CD8-positive, alpha-beta T cell (primary cell): ENCODE measurements at regions of chr2 and their contacts with region 1.

Region 1: DNA sequence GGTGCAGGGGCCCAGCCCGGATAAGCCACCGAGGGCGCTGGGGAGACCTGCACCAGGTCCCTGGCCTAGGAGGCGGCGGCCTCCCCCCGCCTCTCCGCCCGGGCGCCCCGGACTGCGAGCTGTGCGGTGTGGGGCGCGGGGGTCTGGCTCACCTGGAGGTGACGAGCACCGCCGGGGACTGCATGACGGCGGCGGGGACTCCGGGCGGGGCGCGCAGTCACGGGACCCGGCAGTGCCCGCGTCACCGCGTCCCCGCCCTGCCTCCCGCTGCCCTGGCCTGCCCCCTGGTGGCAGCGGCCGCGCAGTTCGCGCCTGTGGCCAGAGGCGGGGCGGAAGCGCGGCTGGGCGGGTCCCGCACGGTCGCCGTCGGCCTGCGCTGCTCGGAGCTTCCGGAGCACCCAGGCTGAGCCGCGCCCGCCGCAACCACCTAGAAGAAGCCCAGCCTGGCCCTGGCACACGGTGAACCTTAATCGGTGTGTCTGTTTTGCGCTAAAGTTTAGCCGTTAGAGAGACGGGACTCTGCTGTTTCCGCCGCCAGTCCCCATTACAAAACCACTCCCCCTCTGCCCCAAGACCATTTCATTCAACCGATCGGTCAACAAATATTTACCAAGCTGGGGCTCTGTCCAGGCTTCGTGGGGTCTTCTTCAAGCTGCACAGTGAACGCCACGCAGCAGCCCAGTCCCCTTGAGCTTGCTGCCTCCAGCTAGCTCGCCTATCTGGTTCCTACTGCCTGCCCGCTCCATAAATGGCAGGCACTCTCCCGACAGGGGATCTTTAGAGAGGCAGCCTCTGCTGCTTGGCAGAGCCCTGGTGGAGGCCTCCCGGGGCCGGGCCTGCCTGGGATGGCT is at the start of gene HS1BP3:
- DNase-seq: peak; percentile 82 to 95 (median 88)
- ATAC-seq: peak; percentile 91
- H3K4me3 ChIP-seq: peak within 1 kb of the TSS; percentile 76 to 95
- H3K4me3 Mint-ChIP-seq: peak within 1 kb of the TSS; percentile 85
- H3K27ac ChIP-seq: peak within 1 kb of the TSS; percentile 93 to 94
- H3K27ac Mint-ChIP-seq: peak within 1 kb of the TSS; percentile 91
- H3K4me1 ChIP-seq: peaks cover 19% of the 10 kb centered on the region
- H3K4me1 Mint-ChIP-seq: peaks cover 34% of the 10 kb centered on the region
- H3K27me3 ChIP-seq: no peaks in the 10 kb centered on the region
- H3K27me3 Mint-ChIP-seq: peaks cover 2% of the 10 kb centered on the region
- CTCF ChIP-seq: peak; percentile 86
- total RNA-seq, gene HS1BP3: 3.3 to 6.9 TPM

Region 2: DNA sequence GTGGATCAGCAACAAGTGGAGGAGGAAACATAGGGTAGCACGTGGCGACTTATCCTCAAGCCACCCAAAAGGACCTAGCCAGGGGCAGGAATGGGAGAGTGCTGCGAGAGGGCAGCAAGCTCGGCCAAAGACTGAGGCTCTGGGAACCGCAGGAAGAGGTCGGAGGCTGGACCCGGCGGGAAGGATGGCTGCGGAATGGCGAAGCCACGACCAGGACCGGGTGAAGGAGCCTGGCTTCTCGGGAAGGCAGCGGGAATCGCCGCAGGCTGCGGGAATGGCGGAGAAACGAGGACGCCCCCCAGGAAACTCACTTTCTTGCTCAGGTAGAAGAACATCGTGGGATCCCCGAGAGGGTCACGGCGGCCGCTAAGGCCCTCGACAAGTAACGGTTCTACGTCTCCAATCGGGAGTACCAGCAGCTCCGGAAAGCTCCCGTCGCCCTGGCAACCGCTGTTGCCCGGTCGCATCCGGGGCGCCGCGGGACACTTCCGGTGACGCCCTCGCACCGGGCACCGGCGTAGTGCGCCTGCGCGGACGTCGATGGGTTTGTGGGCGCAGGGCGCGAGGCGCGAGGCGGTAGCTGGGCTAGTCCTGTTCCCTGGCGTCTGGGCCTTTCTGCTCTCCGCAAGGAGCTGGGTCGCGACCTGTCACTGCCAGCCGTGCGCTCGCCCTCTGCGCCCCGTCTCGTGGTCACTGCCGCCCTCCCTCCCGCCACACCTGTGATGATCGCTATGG is 661.3 kb before region 1 on chr2 and contains the start of gene WDR35:
- CTCF ChIA-PET with region 1: no interaction called
- POLR2A ChIA-PET with region 1: interaction called, 3 read pairs
- intact Hi-C with region 1: loop called in 1 of 2 experiments (anchors 1 kb)
- DNase-seq: peak; percentile 80 to 96 (median 92)
- ATAC-seq: peak; percentile 94
- H3K4me3 ChIP-seq: peak within 1 kb of the TSS; percentile 84 to 96
- H3K4me3 Mint-ChIP-seq: peak within 1 kb of the TSS; percentile 90
- H3K27ac ChIP-seq: peak within 1 kb of the TSS; percentile 68 to 74
- H3K27ac Mint-ChIP-seq: peak within 1 kb of the TSS; percentile 86
- H3K4me1 ChIP-seq: peaks cover 10% of the 10 kb centered on the region
- H3K4me1 Mint-ChIP-seq: peaks cover 28% of the 10 kb centered on the region
- H3K27me3 ChIP-seq: peaks cover 0 to 3% of the 10 kb centered on the region in 2 experiments
- H3K27me3 Mint-ChIP-seq: peaks cover 14% of the 10 kb centered on the region
- CTCF ChIP-seq: no peak
- total RNA-seq, gene WDR35: 2.4 to 2.9 TPM

Region 3: GRCh38 chr2:20057268-20057667 is 593.8 kb before region 1 on chr2:
- CTCF ChIA-PET with region 1: no interaction called
- POLR2A ChIA-PET with region 1: no interaction called
- intact Hi-C with region 1: loop called in 1 of 2 experiments (anchors 5 kb)
- DNase-seq: no peak
- ATAC-seq: no peak
- H3K4me3 ChIP-seq: no peak overlapping the region
- H3K4me3 Mint-ChIP-seq: no peak overlapping the region
- H3K27ac ChIP-seq: no peak overlapping the region
- H3K27ac Mint-ChIP-seq: no peak overlapping the region
- H3K4me1 ChIP-seq: peaks cover 6% of the 10 kb centered on the region
- H3K4me1 Mint-ChIP-seq: no peaks in the 10 kb centered on the region
- H3K27me3 ChIP-seq: no peaks in the 10 kb centered on the region
- H3K27me3 Mint-ChIP-seq: peaks cover 23% of the 10 kb centered on the region
- CTCF ChIP-seq: no peak

Region 4: DNA sequence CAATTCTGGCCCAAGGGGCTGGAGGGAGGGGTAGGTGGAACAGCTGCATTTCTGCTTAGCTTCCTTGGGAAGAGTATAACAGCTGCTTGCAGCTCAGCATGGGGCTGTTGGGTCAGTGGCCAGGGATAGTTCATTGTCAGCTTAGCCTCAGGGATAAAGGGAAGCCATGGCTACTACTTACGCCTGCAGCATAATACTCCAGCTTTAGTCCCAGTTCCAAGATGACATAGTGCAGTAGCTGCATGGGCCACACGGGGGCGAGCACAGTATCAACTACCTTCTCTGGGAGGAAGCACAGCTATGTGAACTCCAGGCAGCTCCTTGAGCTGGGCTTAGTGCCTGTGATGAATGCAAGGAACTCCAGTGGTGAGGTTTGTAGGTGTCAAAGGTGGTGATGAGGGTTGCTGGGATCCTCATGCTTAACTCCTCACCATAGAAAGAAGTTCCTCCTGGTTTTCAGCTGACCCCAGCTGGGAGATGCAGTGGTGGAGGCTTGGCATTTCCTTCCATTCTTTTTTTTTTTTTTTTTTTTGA is 239.7 kb before region 1 on chr2:
- CTCF ChIA-PET with region 1: interaction called, 14 read pairs
- POLR2A ChIA-PET with region 1: no interaction called
- intact Hi-C with region 1: loop called in 1 of 2 experiments (anchors 1 kb)
- DNase-seq: peak; percentile 37 to 73 (median 64)
- ATAC-seq: peak; percentile 99
- H3K4me3 ChIP-seq: no peak overlapping the region
- H3K4me3 Mint-ChIP-seq: no peak overlapping the region
- H3K27ac ChIP-seq: no peak overlapping the region
- H3K27ac Mint-ChIP-seq: no peak overlapping the region
- H3K4me1 ChIP-seq: no peaks in the 10 kb centered on the region
- H3K4me1 Mint-ChIP-seq: no peaks in the 10 kb centered on the region
- H3K27me3 ChIP-seq: no peaks in the 10 kb centered on the region
- H3K27me3 Mint-ChIP-seq: peaks cover 11% of the 10 kb centered on the region
- CTCF ChIP-seq: peak; percentile 60

Region 5: GRCh38 chr2:20446917-20447436 is 204.1 kb before region 1 on chr2 and contains the start of gene RHOB:
- CTCF ChIA-PET with region 1: interaction called, 18 read pairs
- POLR2A ChIA-PET with region 1: interaction called, 40 read pairs
- intact Hi-C with region 1: loop called in 1 of 2 experiments (anchors 1 kb)
- DNase-seq: peak; percentile 77 to 97 (median 86)
- ATAC-seq: peak; percentile 96
- H3K4me3 ChIP-seq: peak within 1 kb of the TSS; percentile 71 to 77
- H3K4me3 Mint-ChIP-seq: peak within 1 kb of the TSS; percentile 85
- H3K27ac ChIP-seq: peak within 1 kb of the TSS; percentile 66 to 78
- H3K27ac Mint-ChIP-seq: peak within 1 kb of the TSS; percentile 57
- H3K4me1 ChIP-seq: peaks cover 17% of the 10 kb centered on the region
- H3K4me1 Mint-ChIP-seq: peaks cover 13% of the 10 kb centered on the region
- H3K27me3 ChIP-seq: peaks cover 0 to 7% of the 10 kb centered on the region in 2 experiments
- H3K27me3 Mint-ChIP-seq: peaks cover 10% of the 10 kb centered on the region
- CTCF ChIP-seq: no peak
- total RNA-seq, gene RHOB: 24.0 to 24.7 TPM

Region 6: GRCh38 chr2:20822535-20823490 is 171.7 kb after region 1 on chr2 and contains the start of gene LDAH:
- CTCF ChIA-PET with region 1: interaction called, 6 read pairs
- POLR2A ChIA-PET with region 1: interaction called, 17 read pairs
- intact Hi-C with region 1: loop called (anchors 2 kb)
- DNase-seq: peak; percentile 67 to 92 (median 86)
- ATAC-seq: peak; percentile 84
- H3K4me3 ChIP-seq: peak within 1 kb of the TSS; percentile 79 to 86
- H3K4me3 Mint-ChIP-seq: peak within 1 kb of the TSS; percentile 97
- H3K27ac ChIP-seq: peak within 1 kb of the TSS; percentile 89 to 94
- H3K27ac Mint-ChIP-seq: peak within 1 kb of the TSS; percentile 99
- H3K4me1 ChIP-seq: no peaks in the 10 kb centered on the region
- H3K4me1 Mint-ChIP-seq: peaks cover 28% of the 10 kb centered on the region
- H3K27me3 ChIP-seq: no peaks in the 10 kb centered on the region
- H3K27me3 Mint-ChIP-seq: no peaks in the 10 kb centered on the region
- CTCF ChIP-seq: no peak
- total RNA-seq, gene LDAH: 3.0 to 4.6 TPM

Region 7: DNA sequence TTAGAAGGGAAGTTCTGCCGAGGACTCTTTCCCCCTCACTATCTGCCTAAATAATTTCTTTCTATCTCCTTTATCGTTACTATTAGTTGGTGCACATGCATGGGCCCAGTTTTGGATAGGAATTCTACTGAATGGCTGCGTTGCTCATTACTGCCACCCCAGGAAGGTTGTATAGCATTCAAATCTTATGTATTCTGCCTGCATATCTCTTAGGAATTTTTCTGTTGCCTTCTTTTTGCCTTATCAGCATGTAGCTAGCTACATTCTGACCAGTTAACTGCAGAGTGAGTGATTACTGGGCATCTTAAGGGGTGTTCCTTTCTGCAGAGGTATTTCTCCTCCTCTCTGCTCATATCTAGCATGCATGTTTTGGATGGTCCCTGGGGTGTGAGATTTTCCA is 712.3 kb after region 1 on chr2:
- CTCF ChIA-PET with region 1: no interaction called
- POLR2A ChIA-PET with region 1: no interaction called
- intact Hi-C with region 1: no loop called
- DNase-seq: no peak
- ATAC-seq: no peak
- H3K4me3 ChIP-seq: no peak overlapping the region
- H3K4me3 Mint-ChIP-seq: no peak overlapping the region
- H3K27ac ChIP-seq: no peak overlapping the region
- H3K27ac Mint-ChIP-seq: no peak overlapping the region
- H3K4me1 ChIP-seq: no peaks in the 10 kb centered on the region
- H3K4me1 Mint-ChIP-seq: no peaks in the 10 kb centered on the region
- H3K27me3 ChIP-seq: no peaks in the 10 kb centered on the region
- H3K27me3 Mint-ChIP-seq: no peaks in the 10 kb centered on the region
- CTCF ChIP-seq: no peak